ENCODE measurements at regions of chrX and their contacts with region 1.

Region 1: GRCh38 chrX:70422851-70423341 is at the start of gene GDPD2:
- ATAC-seq: peak in 7 of 8 experiments; percentile 56 to 94 (median 93)
- H3K4me3 ChIP-seq: peak within 1 kb of the TSS; percentile 5 to 29 (median 24)
- H3K27ac ChIP-seq: peak within 1 kb of the TSS; percentile 5 to 59
- H3K4me1 ChIP-seq: peaks cover 30 to 38% of the 10 kb centered on the region in 2 donors
- total RNA-seq, gene GDPD2: 0.15 to 37.9 (median 5.8) TPM in 7 of 8 experiments, not detected in the other

Region 2: GRCh38 chrX:69896046-69896445 is 526.9 kb before region 1 on chrX:
- in situ Hi-C with region 1: no loop called
- ATAC-seq: no peak
- H3K4me3 ChIP-seq: no peak overlapping the region
- H3K27ac ChIP-seq: no peak overlapping the region
- H3K4me1 ChIP-seq: no peaks in the 10 kb centered on the region

Region 3: GRCh38 chrX:70301716-70302115 is 121.2 kb before region 1 on chrX:
- in situ Hi-C with region 1: loop called in 1 of 9 experiments (anchors 25 kb)
- ATAC-seq: peak in 3 of 8 experiments; percentile 38 to 41 (median 41)
- H3K4me3 ChIP-seq: no peak overlapping the region
- H3K27ac ChIP-seq: no peak overlapping the region
- H3K4me1 ChIP-seq: no peaks in the 10 kb centered on the region

Measured in motor neuron (in vitro differentiated cells).